CD8-positive, alpha-beta T cell (primary cell): ENCODE measurements at regions of chr7 and their contacts with region 1.

Region 1: GRCh38 chr7:25894902-25895791 is 256.9 kb upstream of the NFE2L3 start:
- DNase-seq: peak; percentile 41 to 80 (median 63)
- ATAC-seq: peak; percentile 41
- H3K4me3 ChIP-seq: peak overlapping the region in 1 of 2 experiments; percentile 12
- H3K4me3 Mint-ChIP-seq: peak overlapping the region; percentile 35
- H3K27ac ChIP-seq: no peak overlapping the region
- H3K27ac Mint-ChIP-seq: no peak overlapping the region
- H3K4me1 ChIP-seq: peaks cover 14% of the 10 kb centered on the region
- H3K4me1 Mint-ChIP-seq: peaks cover 21% of the 10 kb centered on the region
- H3K27me3 ChIP-seq: no peaks in the 10 kb centered on the region
- H3K27me3 Mint-ChIP-seq: peaks cover under 1% of the 10 kb centered on the region
- CTCF ChIP-seq: peak; percentile 45

Region 2: GRCh38 chr7:25835197-25835596 is 60.0 kb before region 1 on chr7:
- CTCF ChIA-PET with region 1: no interaction called
- POLR2A ChIA-PET with region 1: no interaction called
- intact Hi-C with region 1: no loop called
- DNase-seq: no peak
- ATAC-seq: no peak
- H3K4me3 ChIP-seq: no peak overlapping the region
- H3K4me3 Mint-ChIP-seq: no peak overlapping the region
- H3K27ac ChIP-seq: no peak overlapping the region
- H3K27ac Mint-ChIP-seq: no peak overlapping the region
- H3K4me1 ChIP-seq: no peaks in the 10 kb centered on the region
- H3K4me1 Mint-ChIP-seq: no peaks in the 10 kb centered on the region
- H3K27me3 ChIP-seq: no peaks in the 10 kb centered on the region
- H3K27me3 Mint-ChIP-seq: peaks cover 22% of the 10 kb centered on the region
- CTCF ChIP-seq: no peak

Region 3: DNA sequence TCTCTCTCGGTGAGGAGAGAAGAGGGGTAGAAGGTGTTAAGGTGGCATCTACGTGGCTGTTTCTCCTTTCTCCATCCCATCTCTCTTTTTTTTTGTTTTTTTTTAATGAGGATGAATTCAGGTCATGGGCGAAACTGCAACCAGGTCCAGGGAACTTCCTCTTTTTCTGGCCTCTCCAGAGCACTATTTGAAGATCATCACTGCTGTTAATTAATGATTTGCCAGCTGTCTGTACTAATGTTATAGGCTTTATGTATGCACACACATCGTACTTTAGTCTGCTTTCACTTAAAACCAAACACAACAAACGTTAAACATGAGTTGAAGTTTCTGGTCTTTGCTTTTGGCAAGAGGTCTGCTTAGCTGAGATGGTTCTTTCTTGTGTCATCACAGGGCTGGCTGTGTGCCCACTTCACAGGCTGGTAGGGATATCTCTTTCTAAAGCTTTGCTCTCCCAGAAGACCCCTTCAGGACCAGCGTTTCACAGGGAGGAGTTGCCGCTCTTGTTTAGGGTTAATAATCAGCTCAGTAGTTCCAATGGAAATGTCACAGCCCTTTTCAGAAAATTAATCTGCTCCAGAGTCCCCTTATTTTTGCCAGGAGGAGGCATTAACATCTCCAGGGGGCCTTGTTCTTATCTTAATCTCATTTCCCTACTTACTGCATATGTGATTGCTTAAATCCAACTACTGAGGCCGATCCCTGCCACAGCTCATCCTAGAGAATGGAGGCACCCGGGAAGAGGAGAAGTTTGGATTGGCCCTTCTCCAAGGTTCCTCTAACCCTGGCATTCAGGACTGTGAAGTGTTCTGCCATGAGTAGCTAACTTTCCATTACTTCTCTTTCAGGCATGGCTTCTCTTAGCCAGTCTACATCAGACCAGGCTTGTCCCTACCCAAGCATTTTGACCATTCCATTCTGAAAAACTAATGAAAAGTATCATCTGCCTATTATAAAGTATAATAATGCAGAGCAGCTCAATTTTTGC is 17.1 kb before region 1 on chr7:
- CTCF ChIA-PET with region 1: interaction called, 35 read pairs
- POLR2A ChIA-PET with region 1: no interaction called
- intact Hi-C with region 1: no loop called
- DNase-seq: no peak
- ATAC-seq: no peak
- H3K4me3 ChIP-seq: no peak overlapping the region
- H3K4me3 Mint-ChIP-seq: no peak overlapping the region
- H3K27ac ChIP-seq: no peak overlapping the region
- H3K27ac Mint-ChIP-seq: no peak overlapping the region
- H3K4me1 ChIP-seq: no peaks in the 10 kb centered on the region
- H3K4me1 Mint-ChIP-seq: no peaks in the 10 kb centered on the region
- H3K27me3 ChIP-seq: peaks cover 0 to 6% of the 10 kb centered on the region in 2 experiments
- H3K27me3 Mint-ChIP-seq: peaks cover 53% of the 10 kb centered on the region
- CTCF ChIP-seq: no peak

Region 4: GRCh38 chr7:26006426-26006825 is 111.3 kb after region 1 on chr7:
- CTCF ChIA-PET with region 1: interaction called, 10 read pairs
- POLR2A ChIA-PET with region 1: no interaction called
- intact Hi-C with region 1: no loop called
- DNase-seq: no peak
- ATAC-seq: no peak
- H3K4me3 ChIP-seq: no peak overlapping the region
- H3K4me3 Mint-ChIP-seq: no peak overlapping the region
- H3K27ac ChIP-seq: no peak overlapping the region
- H3K27ac Mint-ChIP-seq: no peak overlapping the region
- H3K4me1 ChIP-seq: no peaks in the 10 kb centered on the region
- H3K4me1 Mint-ChIP-seq: peaks cover 3% of the 10 kb centered on the region
- H3K27me3 ChIP-seq: no peaks in the 10 kb centered on the region
- H3K27me3 Mint-ChIP-seq: peaks cover 13% of the 10 kb centered on the region
- CTCF ChIP-seq: no peak

Region 5: DNA sequence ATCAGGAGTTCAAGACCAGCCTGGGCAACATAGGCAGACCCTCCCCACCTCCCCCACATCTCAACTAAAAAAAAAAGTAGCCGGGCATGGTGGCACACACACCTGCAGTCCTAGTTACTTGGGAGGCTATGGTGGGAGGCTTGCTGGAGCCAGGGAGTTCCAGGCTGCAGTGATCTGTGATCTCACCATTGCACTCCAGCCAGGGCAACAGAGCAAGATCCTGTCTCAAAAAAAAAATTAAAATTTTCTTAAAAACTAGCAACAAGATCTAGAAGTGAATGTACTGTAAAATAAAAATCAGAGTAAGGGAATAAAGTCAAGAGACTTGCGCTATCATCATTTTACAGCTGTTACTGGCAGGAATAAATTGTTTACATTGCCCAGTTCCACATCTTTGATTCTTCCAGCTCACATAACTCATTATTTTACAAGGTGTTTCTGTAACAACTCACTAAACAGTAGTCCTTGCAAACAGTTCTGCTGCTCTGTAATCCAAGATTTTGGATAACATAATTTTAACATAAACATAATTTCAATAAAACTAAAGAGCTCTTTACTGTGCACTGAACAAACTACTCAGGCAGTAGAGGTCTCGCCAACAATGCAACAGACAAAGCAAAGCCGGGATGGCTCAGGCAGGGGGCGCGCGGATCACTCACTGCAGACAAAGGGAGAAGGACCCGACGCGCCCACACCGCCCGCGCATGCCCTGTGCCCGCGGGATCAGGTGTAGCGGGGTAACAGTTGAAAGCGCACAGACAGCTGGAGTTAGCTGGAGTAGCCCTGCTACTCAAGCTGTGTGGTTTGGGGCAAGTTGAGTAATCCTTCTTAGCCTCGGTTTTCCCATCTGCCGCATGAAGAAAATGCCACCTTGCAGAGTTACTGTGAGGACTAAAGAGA is 183.5 kb after region 1 on chr7:
- CTCF ChIA-PET with region 1: interaction called, 15 read pairs
- POLR2A ChIA-PET with region 1: no interaction called
- intact Hi-C with region 1: loop called in 1 of 2 experiments (anchors 5 kb)
- DNase-seq: peak; percentile 65 to 88 (median 81)
- ATAC-seq: peak; percentile 100
- H3K4me3 ChIP-seq: peak overlapping the region in 1 of 2 experiments; percentile 18
- H3K4me3 Mint-ChIP-seq: no peak overlapping the region
- H3K27ac ChIP-seq: no peak overlapping the region
- H3K27ac Mint-ChIP-seq: no peak overlapping the region
- H3K4me1 ChIP-seq: peaks cover 4% of the 10 kb centered on the region
- H3K4me1 Mint-ChIP-seq: peaks cover 6% of the 10 kb centered on the region
- H3K27me3 ChIP-seq: peaks cover 0 to 8% of the 10 kb centered on the region in 2 experiments
- H3K27me3 Mint-ChIP-seq: peaks cover 19% of the 10 kb centered on the region
- CTCF ChIP-seq: peak; percentile 80

Region 6: DNA sequence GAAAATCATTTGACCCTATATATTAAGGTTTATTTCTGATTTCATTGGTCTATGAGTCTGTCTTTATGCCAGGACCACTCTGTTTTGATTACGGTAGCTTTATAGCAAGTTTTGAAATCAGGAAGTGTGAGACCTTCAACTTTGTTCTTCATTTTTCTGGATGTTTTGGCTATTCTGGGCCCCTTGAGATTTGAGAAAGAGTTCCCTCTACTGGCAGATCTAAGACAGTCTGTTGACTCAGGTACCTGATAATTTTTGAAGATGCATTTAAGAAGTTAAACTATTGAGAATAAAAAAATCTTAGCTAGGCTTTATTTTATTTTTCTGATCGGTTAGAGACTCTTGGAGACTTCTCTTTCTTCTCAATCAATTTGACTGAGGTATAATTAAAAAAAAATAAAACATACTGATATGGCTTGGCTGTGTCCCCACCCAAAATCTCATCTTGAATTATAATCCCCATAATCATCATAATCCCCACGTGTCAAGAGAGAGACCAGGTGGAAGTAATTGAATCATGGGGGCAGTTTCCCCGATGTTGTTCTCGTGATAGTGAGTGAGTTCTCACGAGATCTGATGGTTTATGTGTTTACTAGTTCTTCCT is 605.7 kb after region 1 on chr7:
- CTCF ChIA-PET with region 1: interaction called, 3 read pairs
- POLR2A ChIA-PET with region 1: no interaction called
- intact Hi-C with region 1: loop called in 1 of 2 experiments (anchors 2 kb)
- DNase-seq: peak in 2 of 9 experiments; percentile 16 to 43
- ATAC-seq: no peak
- H3K4me3 ChIP-seq: no peak overlapping the region
- H3K4me3 Mint-ChIP-seq: no peak overlapping the region
- H3K27ac ChIP-seq: no peak overlapping the region
- H3K27ac Mint-ChIP-seq: no peak overlapping the region
- H3K4me1 ChIP-seq: no peaks in the 10 kb centered on the region
- H3K4me1 Mint-ChIP-seq: no peaks in the 10 kb centered on the region
- H3K27me3 ChIP-seq: no peaks in the 10 kb centered on the region
- H3K27me3 Mint-ChIP-seq: peaks cover 4% of the 10 kb centered on the region
- CTCF ChIP-seq: peak; percentile 19

Region 7: GRCh38 chr7:26686448-26686981 is 791.4 kb after region 1 on chr7:
- CTCF ChIA-PET with region 1: interaction called, 4 read pairs
- POLR2A ChIA-PET with region 1: no interaction called
- intact Hi-C with region 1: loop called (anchors 5 kb)
- DNase-seq: peak in 3 of 9 experiments; percentile 5 to 59 (median 49)
- ATAC-seq: peak; percentile 38
- H3K4me3 ChIP-seq: no peak overlapping the region
- H3K4me3 Mint-ChIP-seq: no peak overlapping the region
- H3K27ac ChIP-seq: no peak overlapping the region
- H3K27ac Mint-ChIP-seq: no peak overlapping the region
- H3K4me1 ChIP-seq: no peaks in the 10 kb centered on the region
- H3K4me1 Mint-ChIP-seq: no peaks in the 10 kb centered on the region
- H3K27me3 ChIP-seq: no peaks in the 10 kb centered on the region
- H3K27me3 Mint-ChIP-seq: peaks cover 28% of the 10 kb centered on the region
- CTCF ChIP-seq: peak; percentile 89